Lower leg skin (tissue), 4 donors: ENCODE measurements at regions of chrX and their contacts with region 1.

Region 1: GRCh38 chrX:110407910-110408545 is 49.4 kb downstream of the RTL9 start:
- DNase-seq: peak in 1 of 2 donors; percentile 70
- H3K4me3 ChIP-seq: no peak overlapping the region
- CTCF ChIP-seq: peak in 1 of 3 donors; percentile 27
- POLR2A ChIP-seq: no peak

Region 2: GRCh38 chrX:110163488-110163887 is 244.5 kb before region 1 on chrX:
- intact Hi-C with region 1: loop called (anchors 5 kb)
- DNase-seq: no peak
- H3K4me3 ChIP-seq: no peak overlapping the region
- CTCF ChIP-seq: no peak
- POLR2A ChIP-seq: no peak

Region 3: GRCh38 chrX:110374559-110374958 is 33.5 kb before region 1 on chrX:
- intact Hi-C with region 1: loop called (anchors 2 kb)
- DNase-seq: no peak
- H3K4me3 ChIP-seq: no peak overlapping the region
- CTCF ChIP-seq: no peak
- POLR2A ChIP-seq: no peak